ENCODE measurements at regions of chr2 and their contacts with region 1.

Region 1: DNA sequence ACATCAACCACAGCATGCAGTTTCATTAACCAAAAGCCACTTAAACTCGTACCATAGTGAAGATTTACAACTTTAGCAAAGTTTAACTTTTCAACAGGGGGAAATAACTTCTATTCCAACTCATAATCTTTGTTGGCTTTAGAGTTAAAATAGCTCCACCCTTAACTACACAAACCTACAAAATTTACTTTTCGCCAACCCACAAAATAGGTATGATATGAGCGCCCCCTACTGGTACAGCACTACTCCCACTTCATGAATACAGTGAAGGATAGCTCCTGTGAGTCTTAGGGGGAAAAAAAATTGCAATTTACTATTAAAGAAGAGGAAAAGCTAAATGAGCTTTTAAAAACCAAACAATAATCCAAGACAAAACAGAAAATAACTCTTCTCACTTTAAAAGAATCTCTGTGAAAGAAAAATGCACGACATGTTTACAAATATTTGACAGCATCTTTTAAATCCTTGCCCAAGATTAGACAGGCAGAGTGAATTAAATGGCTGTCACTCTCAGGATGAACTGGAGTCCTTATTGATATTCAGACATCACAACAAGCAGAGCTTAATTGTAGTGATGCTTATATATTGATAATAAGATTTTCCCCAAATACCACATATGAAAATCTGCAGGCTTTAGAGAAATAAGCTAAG is 32.2 kb downstream of the TMEFF2 start:
- DNase-seq: peak; percentile 80
- ATAC-seq: peak; percentile 81
- H3K4me3 Mint-ChIP-seq: no peak overlapping the region
- H3K27ac Mint-ChIP-seq: no peak overlapping the region
- H3K4me1 Mint-ChIP-seq: peaks cover 7% of the 10 kb centered on the region
- H3K27me3 Mint-ChIP-seq: peaks cover 13% of the 10 kb centered on the region

Region 2: GRCh38 chr2:191544461-191545062 is 618.0 kb before region 1 on chr2:
- CTCF ChIA-PET with region 1: interaction called, 10 read pairs
- POLR2A ChIA-PET with region 1: no interaction called
- DNase-seq: no peak
- ATAC-seq: no peak
- H3K4me3 Mint-ChIP-seq: no peak overlapping the region
- H3K27ac Mint-ChIP-seq: no peak overlapping the region
- H3K4me1 Mint-ChIP-seq: no peaks in the 10 kb centered on the region
- H3K27me3 Mint-ChIP-seq: peaks cover 12% of the 10 kb centered on the region

Region 3: GRCh38 chr2:191566344-191566743 is 596.2 kb before region 1 on chr2:
- CTCF ChIA-PET with region 1: interaction called, 23 read pairs
- POLR2A ChIA-PET with region 1: no interaction called
- DNase-seq: peak; percentile 76
- ATAC-seq: peak; percentile 60
- H3K4me3 Mint-ChIP-seq: no peak overlapping the region
- H3K27ac Mint-ChIP-seq: no peak overlapping the region
- H3K4me1 Mint-ChIP-seq: peaks cover 57% of the 10 kb centered on the region
- H3K27me3 Mint-ChIP-seq: peaks cover 55% of the 10 kb centered on the region

Region 4: GRCh38 chr2:191811807-191812602 is 350.5 kb before region 1 on chr2:
- CTCF ChIA-PET with region 1: interaction called, 65 read pairs
- POLR2A ChIA-PET with region 1: no interaction called
- DNase-seq: peak; percentile 51
- ATAC-seq: no peak
- H3K4me3 Mint-ChIP-seq: no peak overlapping the region
- H3K27ac Mint-ChIP-seq: no peak overlapping the region
- H3K4me1 Mint-ChIP-seq: no peaks in the 10 kb centered on the region
- H3K27me3 Mint-ChIP-seq: peaks cover 10% of the 10 kb centered on the region

Region 5: DNA sequence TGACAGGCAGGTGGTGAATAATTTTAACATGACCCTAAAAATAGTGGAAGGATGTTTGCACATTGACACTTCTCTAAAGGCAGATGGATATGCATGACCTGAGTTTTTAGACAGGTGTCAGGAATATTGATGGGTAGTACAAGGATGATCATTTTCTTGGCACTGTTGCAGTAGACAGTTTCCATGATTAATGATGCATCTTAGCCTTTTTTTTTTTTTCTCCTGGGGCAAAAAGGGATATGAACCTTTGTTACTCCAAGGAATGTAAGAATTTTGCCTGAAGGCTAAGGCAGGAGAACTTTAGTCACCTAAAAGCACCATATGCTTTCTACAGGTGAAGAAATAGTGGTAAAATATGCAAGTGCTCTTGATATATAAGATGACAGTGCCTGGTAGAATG is 179.3 kb before region 1 on chr2:
- CTCF ChIA-PET with region 1: interaction called, 10 read pairs
- POLR2A ChIA-PET with region 1: no interaction called
- DNase-seq: no peak
- ATAC-seq: no peak
- H3K4me3 Mint-ChIP-seq: no peak overlapping the region
- H3K27ac Mint-ChIP-seq: no peak overlapping the region
- H3K4me1 Mint-ChIP-seq: no peaks in the 10 kb centered on the region
- H3K27me3 Mint-ChIP-seq: peaks cover 10% of the 10 kb centered on the region

Region 6: DNA sequence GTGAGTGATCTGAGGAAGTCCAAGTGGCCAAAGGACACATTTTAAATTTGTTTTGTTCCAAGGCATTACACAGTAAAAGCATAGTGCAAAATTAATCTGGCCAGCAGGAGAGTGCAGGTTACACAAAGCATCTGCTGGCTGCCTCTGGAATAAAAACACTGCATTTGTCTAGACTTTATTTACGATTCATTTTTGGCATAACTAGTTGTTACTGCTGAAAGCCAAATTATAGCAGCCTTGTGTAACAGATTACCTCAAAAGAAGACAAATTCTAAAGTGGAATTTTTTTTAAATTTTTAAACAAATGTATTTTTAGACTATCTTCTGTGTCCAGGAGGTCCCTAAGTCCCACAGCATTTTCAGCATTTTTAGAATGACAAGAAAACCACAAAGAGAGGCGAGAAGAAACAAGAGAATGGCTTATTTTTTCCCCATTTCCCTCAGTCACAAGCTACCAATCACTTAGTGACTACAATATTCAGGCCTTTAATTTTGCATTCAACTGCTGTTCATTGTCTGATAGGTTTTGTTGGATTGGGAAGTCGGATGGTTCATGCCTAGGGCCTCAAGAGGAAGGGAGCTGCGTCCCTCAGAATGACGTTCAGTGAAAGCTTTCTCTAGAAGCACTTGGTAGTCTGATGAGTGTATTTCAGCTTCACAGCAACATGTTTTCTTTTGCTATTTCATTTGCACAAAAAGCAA is 13.7 kb before region 1 on chr2:
- CTCF ChIA-PET with region 1: interaction called, 11 read pairs
- POLR2A ChIA-PET with region 1: no interaction called
- DNase-seq: no peak
- ATAC-seq: no peak
- H3K4me3 Mint-ChIP-seq: no peak overlapping the region
- H3K27ac Mint-ChIP-seq: no peak overlapping the region
- H3K4me1 Mint-ChIP-seq: no peaks in the 10 kb centered on the region
- H3K27me3 Mint-ChIP-seq: peaks cover 7% of the 10 kb centered on the region

Region 7: GRCh38 chr2:192390401-192390800 is 227.9 kb after region 1 on chr2:
- CTCF ChIA-PET with region 1: no interaction called
- POLR2A ChIA-PET with region 1: no interaction called
- DNase-seq: no peak
- ATAC-seq: no peak
- H3K4me3 Mint-ChIP-seq: no peak overlapping the region
- H3K27ac Mint-ChIP-seq: no peak overlapping the region
- H3K4me1 Mint-ChIP-seq: no peaks in the 10 kb centered on the region
- H3K27me3 Mint-ChIP-seq: no peaks in the 10 kb centered on the region